A673 (cell line): ENCODE measurements at regions of chr16 and their contacts with region 1.

Region 1: GRCh38 chr16:66152823-66153393 is 213.6 kb upstream of the CDH5 start:
- DNase-seq: no peak
- H3K4me3 ChIP-seq: no peak overlapping the region
- H3K27ac ChIP-seq: no peak overlapping the region
- H3K4me1 ChIP-seq: peaks cover 21% of the 10 kb centered on the region
- H3K27me3 ChIP-seq: no peaks in the 10 kb centered on the region
- CTCF ChIP-seq: no peak

Region 2: GRCh38 chr16:65793781-65794180 is 359.1 kb before region 1 on chr16:
- CTCF ChIA-PET with region 1: no interaction called
- POLR2A ChIA-PET with region 1: no interaction called
- intact Hi-C with region 1: no loop called
- DNase-seq: no peak
- H3K4me3 ChIP-seq: no peak overlapping the region
- H3K27ac ChIP-seq: no peak overlapping the region
- H3K4me1 ChIP-seq: no peaks in the 10 kb centered on the region
- H3K27me3 ChIP-seq: no peaks in the 10 kb centered on the region
- CTCF ChIP-seq: no peak

Region 3: DNA sequence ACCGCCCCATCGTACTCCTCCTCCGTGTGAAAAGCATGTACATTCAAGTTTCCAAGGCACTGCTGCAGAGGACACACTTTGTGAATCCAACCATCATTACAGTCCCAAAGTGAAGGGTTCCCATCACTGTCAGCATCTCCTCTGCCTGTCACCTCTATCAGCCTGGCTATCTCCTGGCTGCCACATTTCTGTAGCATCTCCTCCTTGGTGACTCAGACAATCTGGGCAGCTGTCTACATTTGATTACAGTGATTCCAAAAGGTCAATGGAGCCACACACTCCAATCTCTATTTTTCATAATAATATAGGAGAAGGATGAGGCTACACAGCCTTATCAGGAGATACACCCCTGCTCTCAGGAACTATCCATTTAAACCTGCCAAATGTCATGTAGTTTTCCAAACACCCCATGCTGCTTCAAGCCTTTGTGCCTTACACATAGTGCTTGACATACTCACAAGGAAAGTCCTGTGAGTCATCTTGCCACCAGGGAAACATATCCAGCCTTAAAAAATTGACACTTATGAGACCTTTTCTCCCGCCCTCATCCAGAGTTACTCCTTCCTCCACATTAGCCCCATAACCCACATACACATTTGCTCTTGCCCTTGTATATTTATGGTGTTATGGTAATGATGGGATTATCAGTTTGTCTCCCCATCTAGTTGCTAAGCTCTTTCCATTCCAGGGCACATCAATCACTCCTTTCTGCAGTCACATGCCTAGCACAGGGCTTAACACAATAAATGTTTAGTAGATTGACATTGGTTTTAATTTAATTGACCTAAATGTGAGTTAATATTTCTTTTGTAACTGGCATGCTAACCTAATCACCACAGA is 36.5 kb before region 1 on chr16:
- CTCF ChIA-PET with region 1: no interaction called
- POLR2A ChIA-PET with region 1: no interaction called
- intact Hi-C with region 1: no loop called
- DNase-seq: peak; percentile 34
- H3K4me3 ChIP-seq: no peak overlapping the region
- H3K27ac ChIP-seq: no peak overlapping the region
- H3K4me1 ChIP-seq: no peaks in the 10 kb centered on the region
- H3K27me3 ChIP-seq: no peaks in the 10 kb centered on the region
- CTCF ChIP-seq: no peak

Region 4: DNA sequence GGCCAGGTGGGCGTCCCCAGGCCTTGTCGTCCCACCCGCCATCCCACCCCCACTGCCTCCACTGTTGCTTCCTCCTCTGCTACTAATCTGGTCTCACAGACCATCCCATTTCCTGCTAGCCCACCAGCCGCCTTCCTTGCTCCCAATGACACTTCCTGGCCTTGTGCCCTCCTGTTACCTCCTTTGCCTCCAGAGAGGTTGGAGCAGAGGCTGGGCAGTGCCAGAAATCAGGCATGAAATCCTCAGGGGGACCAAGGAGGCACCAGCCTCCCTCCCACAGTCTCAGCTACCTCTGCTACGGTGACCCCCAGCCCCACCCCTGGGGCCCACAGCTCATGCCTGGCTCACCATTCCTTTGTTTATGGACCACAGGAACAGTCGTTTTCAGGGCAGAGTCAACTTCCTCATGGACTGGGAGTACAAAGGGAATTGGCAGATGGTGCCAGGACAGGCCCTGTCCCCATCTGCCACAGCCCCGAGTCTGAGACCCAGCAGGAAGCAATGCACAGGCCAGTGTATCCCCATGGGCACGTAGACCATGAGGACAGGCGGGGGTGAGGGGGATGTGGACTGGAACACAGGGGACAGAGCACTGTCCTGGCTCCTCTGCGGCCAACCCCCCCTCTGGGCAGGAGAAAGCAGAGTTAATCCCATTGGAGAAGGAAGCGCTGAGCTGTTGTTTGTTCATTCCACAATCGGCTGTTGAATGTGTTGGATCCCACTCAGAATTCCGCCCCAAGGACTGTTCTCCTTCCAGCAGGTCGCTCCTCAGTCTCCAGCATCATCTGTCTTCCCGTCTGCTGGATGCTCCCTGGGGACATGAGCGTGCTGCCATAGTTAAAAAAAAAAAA is 211.4 kb after region 1 on chr16:
- CTCF ChIA-PET with region 1: interaction called, 10 read pairs
- POLR2A ChIA-PET with region 1: no interaction called
- intact Hi-C with region 1: no loop called
- DNase-seq: peak; percentile 54
- H3K4me3 ChIP-seq: no peak overlapping the region
- H3K27ac ChIP-seq: no peak overlapping the region
- H3K4me1 ChIP-seq: peaks cover 10% of the 10 kb centered on the region
- H3K27me3 ChIP-seq: no peaks in the 10 kb centered on the region
- CTCF ChIP-seq: no peak

Region 5: DNA sequence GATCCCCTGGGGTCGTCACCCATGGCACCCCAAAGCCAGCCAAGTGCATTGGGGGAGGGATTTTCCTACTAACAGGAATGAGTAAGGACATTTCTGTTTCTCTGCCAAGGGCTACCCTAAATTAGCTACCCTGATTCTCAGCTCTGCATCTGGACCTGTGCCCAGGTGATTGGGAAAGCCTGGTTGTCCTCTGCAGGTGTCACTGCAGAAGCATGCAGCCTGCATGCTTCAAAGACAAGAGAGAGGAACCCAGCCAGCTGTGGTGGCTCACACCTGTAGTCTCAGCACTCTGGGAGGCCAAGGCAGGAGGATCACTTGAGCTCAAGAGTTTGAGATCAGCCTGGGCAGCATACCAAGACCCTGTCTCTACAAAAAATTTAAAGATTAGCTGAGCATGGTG is 293.8 kb after region 1 on chr16:
- CTCF ChIA-PET with region 1: no interaction called
- POLR2A ChIA-PET with region 1: no interaction called
- intact Hi-C with region 1: no loop called
- DNase-seq: no peak
- H3K4me3 ChIP-seq: no peak overlapping the region
- H3K27ac ChIP-seq: no peak overlapping the region
- H3K4me1 ChIP-seq: no peaks in the 10 kb centered on the region
- H3K27me3 ChIP-seq: peaks cover 3% of the 10 kb centered on the region
- CTCF ChIP-seq: no peak

Region 6: GRCh38 chr16:66830422-66831404 is 677.8 kb after region 1 on chr16 and contains the start of gene NAE1:
- CTCF ChIA-PET with region 1: interaction called, 13 read pairs
- POLR2A ChIA-PET with region 1: no interaction called
- intact Hi-C with region 1: no loop called
- DNase-seq: peak; percentile 93
- H3K4me3 ChIP-seq: peak within 1 kb of the TSS; percentile 81
- H3K27ac ChIP-seq: peak within 1 kb of the TSS; percentile 95
- H3K4me1 ChIP-seq: peaks cover 8% of the 10 kb centered on the region
- H3K27me3 ChIP-seq: no peaks in the 10 kb centered on the region
- CTCF ChIP-seq: peak; percentile 96
- total RNA-seq, gene NAE1: 172 and 175 TPM in 2 replicates